CD4-positive, alpha-beta memory T cell (primary cell): ENCODE measurements at regions of chr14 and their contacts with region 1.

Region 1: GRCh38 chr14:35416108-35416750 is 11.7 kb upstream of the NFKBIA start:
- DNase-seq: peak; percentile 32 to 91 (median 54)
- H3K4me3 ChIP-seq: no peak overlapping the region
- H3K4me3 Mint-ChIP-seq: peak overlapping the region; percentile 8 to 84 (median 68)
- H3K27ac ChIP-seq: peak overlapping the region; percentile 72
- H3K27ac Mint-ChIP-seq: peak overlapping the region; percentile 86 to 96 (median 92)
- H3K4me1 ChIP-seq: peaks cover 40% of the 10 kb centered on the region
- H3K4me1 Mint-ChIP-seq: peaks cover 36 to 49% (median 41%) of the 10 kb centered on the region in 4 donors
- H3K27me3 ChIP-seq: no peaks in the 10 kb centered on the region
- H3K27me3 Mint-ChIP-seq: no peaks in the 10 kb centered on the region

Region 2: GRCh38 chr14:34671716-34672115 is 744.5 kb before region 1 on chr14:
- CTCF ChIA-PET with region 1: interaction called, 18 read pairs
- POLR2A ChIA-PET with region 1: interaction called, 7 read pairs
- intact Hi-C with region 1: loop called (anchors 2 kb)
- DNase-seq: no peak
- H3K4me3 ChIP-seq: no peak overlapping the region
- H3K4me3 Mint-ChIP-seq: no peak overlapping the region
- H3K27ac ChIP-seq: no peak overlapping the region
- H3K27ac Mint-ChIP-seq: no peak overlapping the region
- H3K4me1 ChIP-seq: peaks cover 3% of the 10 kb centered on the region
- H3K4me1 Mint-ChIP-seq: peaks cover 0 to 3% (median 0%) of the 10 kb centered on the region in 4 donors
- H3K27me3 ChIP-seq: no peaks in the 10 kb centered on the region
- H3K27me3 Mint-ChIP-seq: no peaks in the 10 kb centered on the region

Region 3: GRCh38 chr14:35134328-35135123 is 281.7 kb before region 1 on chr14:
- CTCF ChIA-PET with region 1: interaction called, 44 read pairs
- POLR2A ChIA-PET with region 1: no interaction called
- intact Hi-C with region 1: no loop called
- DNase-seq: no peak
- H3K4me3 ChIP-seq: no peak overlapping the region
- H3K4me3 Mint-ChIP-seq: no peak overlapping the region
- H3K27ac ChIP-seq: no peak overlapping the region
- H3K27ac Mint-ChIP-seq: peak overlapping the region; percentile 38 to 85 (median 76)
- H3K4me1 ChIP-seq: no peaks in the 10 kb centered on the region
- H3K4me1 Mint-ChIP-seq: peaks cover 26 to 37% (median 30%) of the 10 kb centered on the region in 4 donors
- H3K27me3 ChIP-seq: no peaks in the 10 kb centered on the region
- H3K27me3 Mint-ChIP-seq: no peaks in the 10 kb centered on the region

Region 4: GRCh38 chr14:35229495-35230089 is 186.6 kb before region 1 on chr14:
- CTCF ChIA-PET with region 1: interaction called, 87 read pairs
- POLR2A ChIA-PET with region 1: interaction called, 4 read pairs
- intact Hi-C with region 1: no loop called
- DNase-seq: peak in 4 of 5 donors; percentile 21 to 36 (median 28)
- H3K4me3 ChIP-seq: no peak overlapping the region
- H3K4me3 Mint-ChIP-seq: no peak overlapping the region
- H3K27ac ChIP-seq: no peak overlapping the region
- H3K27ac Mint-ChIP-seq: peak overlapping the region in 4 of 7 donors; percentile 8 to 53 (median 28)
- H3K4me1 ChIP-seq: peaks cover 10% of the 10 kb centered on the region
- H3K4me1 Mint-ChIP-seq: peaks cover 16 to 30% (median 24%) of the 10 kb centered on the region in 4 donors
- H3K27me3 ChIP-seq: no peaks in the 10 kb centered on the region
- H3K27me3 Mint-ChIP-seq: no peaks in the 10 kb centered on the region

Region 5: DNA sequence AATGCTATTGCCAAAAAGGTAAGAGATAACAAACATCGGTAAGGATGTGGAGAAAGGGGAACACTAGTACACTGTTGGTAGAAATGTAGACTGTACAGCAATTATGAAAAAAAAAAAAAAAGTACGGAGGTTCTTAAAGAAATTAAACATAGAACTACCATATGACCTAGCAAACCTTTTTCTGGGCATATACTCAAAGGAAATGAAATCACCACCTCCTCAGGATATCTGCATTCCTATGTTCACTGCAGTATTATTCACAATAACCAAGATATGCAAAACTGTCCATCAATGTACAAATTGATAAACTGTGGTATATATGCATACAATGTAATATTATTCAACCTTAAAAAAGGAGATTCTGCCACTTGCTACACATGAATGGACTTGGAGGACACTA is 178.4 kb after region 1 on chr14:
- CTCF ChIA-PET with region 1: no interaction called
- POLR2A ChIA-PET with region 1: no interaction called
- intact Hi-C with region 1: no loop called
- DNase-seq: no peak
- H3K4me3 ChIP-seq: no peak overlapping the region
- H3K4me3 Mint-ChIP-seq: no peak overlapping the region
- H3K27ac ChIP-seq: no peak overlapping the region
- H3K27ac Mint-ChIP-seq: no peak overlapping the region
- H3K4me1 ChIP-seq: no peaks in the 10 kb centered on the region
- H3K4me1 Mint-ChIP-seq: peaks cover 0 to 3% (median 0%) of the 10 kb centered on the region in 4 donors
- H3K27me3 ChIP-seq: no peaks in the 10 kb centered on the region
- H3K27me3 Mint-ChIP-seq: no peaks in the 10 kb centered on the region

Region 6: GRCh38 chr14:35814371-35815005 is 398.3 kb after region 1 on chr14:
- CTCF ChIA-PET with region 1: interaction called, 6 read pairs
- POLR2A ChIA-PET with region 1: no interaction called
- intact Hi-C with region 1: loop called (anchors 10 kb)
- DNase-seq: peak; percentile 66 to 78 (median 73)
- H3K4me3 ChIP-seq: no peak overlapping the region
- H3K4me3 Mint-ChIP-seq: no peak overlapping the region
- H3K27ac ChIP-seq: no peak overlapping the region
- H3K27ac Mint-ChIP-seq: no peak overlapping the region
- H3K4me1 ChIP-seq: no peaks in the 10 kb centered on the region
- H3K4me1 Mint-ChIP-seq: peaks cover 0 to 3% (median under 1%) of the 10 kb centered on the region in 4 donors
- H3K27me3 ChIP-seq: no peaks in the 10 kb centered on the region
- H3K27me3 Mint-ChIP-seq: peaks cover 0 to 2% of the 10 kb centered on the region in 2 donors